Endothelial cell of umbilical vein (primary cell): ENCODE measurements at regions of chr3 and their contacts with region 1.

Region 1: GRCh38 chr3:160163229-160163878 is 61.9 kb upstream of the C3orf80 start:
- DNase-seq: peak; percentile 46
- H3K4me3 ChIP-seq: no peak overlapping the region
- H3K27ac ChIP-seq: no peak overlapping the region
- H3K4me1 ChIP-seq: no peaks in the 10 kb centered on the region
- H3K27me3 ChIP-seq: no peaks in the 10 kb centered on the region
- CTCF ChIP-seq: peak in 1 of 2 donors; percentile 8
- POLR2A ChIP-seq: no peak

Region 2: DNA sequence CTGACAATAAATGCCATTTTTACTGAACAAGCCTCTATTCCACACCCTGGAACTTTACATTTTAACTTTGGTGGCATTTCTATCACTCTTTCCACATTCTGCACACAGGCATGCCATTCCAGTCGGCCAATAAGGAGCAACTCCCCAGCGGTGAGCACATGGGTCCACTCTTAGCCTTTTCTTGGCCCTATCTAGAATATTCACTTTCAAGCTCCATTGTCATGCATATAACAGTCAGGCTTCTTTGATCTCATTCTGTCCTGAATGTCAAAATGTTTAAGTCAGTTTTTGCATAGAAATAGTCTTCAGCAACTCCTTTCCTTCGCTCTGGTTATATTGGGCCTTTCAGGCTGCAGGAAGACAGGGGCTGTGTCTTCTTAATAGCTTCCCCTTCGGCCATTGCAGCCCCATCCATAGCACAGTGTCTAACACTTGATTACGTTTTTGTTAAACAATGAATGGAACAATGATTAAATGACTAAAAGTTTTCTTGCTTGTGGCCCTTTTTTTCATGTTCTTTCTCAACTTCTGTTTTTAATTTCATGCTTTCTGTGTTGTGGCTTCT is 934.2 kb before region 1 on chr3:
- CTCF ChIA-PET with region 1: no interaction called
- POLR2A ChIA-PET with region 1: no interaction called
- dilution Hi-C with region 1: no loop called
- intact Hi-C with region 1: no loop called
- DNase-seq: no peak
- H3K4me3 ChIP-seq: no peak overlapping the region
- H3K27ac ChIP-seq: no peak overlapping the region
- H3K4me1 ChIP-seq: no peaks in the 10 kb centered on the region
- H3K27me3 ChIP-seq: no peaks in the 10 kb centered on the region
- CTCF ChIP-seq: no peak
- POLR2A ChIP-seq: no peak

Region 3: DNA sequence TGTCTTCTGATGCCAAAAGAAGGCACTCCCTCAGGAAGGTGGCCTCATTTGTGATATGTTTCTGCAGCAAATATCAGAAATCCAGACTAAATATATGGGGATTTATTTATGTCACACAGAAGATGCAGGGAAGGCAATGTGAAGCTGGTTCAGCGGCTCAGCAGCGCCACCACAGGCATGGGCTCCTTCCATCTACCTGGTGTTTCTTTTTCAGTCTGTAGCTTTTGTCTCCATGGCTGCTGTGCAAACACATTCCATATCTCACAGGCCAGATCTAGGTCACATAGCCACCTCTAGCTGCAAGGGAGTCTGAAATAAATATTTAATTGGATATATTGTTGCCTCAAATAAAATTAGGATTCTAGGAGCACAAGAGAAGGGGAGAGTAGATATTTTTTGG is 676.8 kb before region 1 on chr3:
- CTCF ChIA-PET with region 1: no interaction called
- POLR2A ChIA-PET with region 1: no interaction called
- dilution Hi-C with region 1: no loop called
- intact Hi-C with region 1: no loop called
- DNase-seq: peak; percentile 9
- H3K4me3 ChIP-seq: no peak overlapping the region
- H3K27ac ChIP-seq: no peak overlapping the region
- H3K4me1 ChIP-seq: no peaks in the 10 kb centered on the region
- H3K27me3 ChIP-seq: peaks cover 0 to 3% of the 10 kb centered on the region in 2 experiments
- CTCF ChIP-seq: peak; percentile 9 to 13
- POLR2A ChIP-seq: no peak

Region 4: DNA sequence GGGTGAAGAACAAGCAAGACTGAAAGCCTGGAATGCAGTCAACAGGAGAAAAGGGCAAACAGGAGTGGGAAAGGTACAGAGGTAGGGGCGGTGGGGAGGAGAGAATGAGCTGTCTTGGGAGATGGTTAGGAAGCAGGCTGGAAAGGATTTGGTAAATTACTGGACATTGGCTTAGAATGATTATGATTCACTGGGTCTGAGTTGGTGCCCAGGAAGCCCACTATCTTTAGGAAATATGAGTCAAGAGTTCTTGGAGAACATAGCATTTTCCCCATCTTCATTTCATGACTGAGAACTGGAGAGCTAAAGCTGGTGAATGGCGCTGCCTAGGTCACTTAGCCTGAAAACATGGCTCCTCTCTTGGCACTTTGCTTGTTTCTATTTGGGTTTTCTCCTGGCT is 12.8 kb before region 1 on chr3:
- CTCF ChIA-PET with region 1: interaction called, 13 read pairs
- POLR2A ChIA-PET with region 1: no interaction called
- dilution Hi-C with region 1: no loop called
- intact Hi-C with region 1: no loop called
- DNase-seq: peak; percentile 56
- H3K4me3 ChIP-seq: no peak overlapping the region
- H3K27ac ChIP-seq: peak overlapping the region; percentile 1
- H3K4me1 ChIP-seq: peaks cover 12% of the 10 kb centered on the region
- H3K27me3 ChIP-seq: no peaks in the 10 kb centered on the region
- CTCF ChIP-seq: no peak
- POLR2A ChIP-seq: no peak

Region 5: GRCh38 chr3:160210799-160211221 is 47.5 kb after region 1 on chr3:
- CTCF ChIA-PET with region 1: interaction called, 20 read pairs
- POLR2A ChIA-PET with region 1: no interaction called
- dilution Hi-C with region 1: no loop called
- intact Hi-C with region 1: loop called (anchors 5 kb)
- DNase-seq: peak; percentile 33
- H3K4me3 ChIP-seq: no peak overlapping the region
- H3K27ac ChIP-seq: no peak overlapping the region
- H3K4me1 ChIP-seq: no peaks in the 10 kb centered on the region
- H3K27me3 ChIP-seq: peaks cover 0 to 4% of the 10 kb centered on the region in 2 experiments
- CTCF ChIP-seq: peak in 1 of 2 donors; percentile 22
- POLR2A ChIP-seq: no peak

Region 6: DNA sequence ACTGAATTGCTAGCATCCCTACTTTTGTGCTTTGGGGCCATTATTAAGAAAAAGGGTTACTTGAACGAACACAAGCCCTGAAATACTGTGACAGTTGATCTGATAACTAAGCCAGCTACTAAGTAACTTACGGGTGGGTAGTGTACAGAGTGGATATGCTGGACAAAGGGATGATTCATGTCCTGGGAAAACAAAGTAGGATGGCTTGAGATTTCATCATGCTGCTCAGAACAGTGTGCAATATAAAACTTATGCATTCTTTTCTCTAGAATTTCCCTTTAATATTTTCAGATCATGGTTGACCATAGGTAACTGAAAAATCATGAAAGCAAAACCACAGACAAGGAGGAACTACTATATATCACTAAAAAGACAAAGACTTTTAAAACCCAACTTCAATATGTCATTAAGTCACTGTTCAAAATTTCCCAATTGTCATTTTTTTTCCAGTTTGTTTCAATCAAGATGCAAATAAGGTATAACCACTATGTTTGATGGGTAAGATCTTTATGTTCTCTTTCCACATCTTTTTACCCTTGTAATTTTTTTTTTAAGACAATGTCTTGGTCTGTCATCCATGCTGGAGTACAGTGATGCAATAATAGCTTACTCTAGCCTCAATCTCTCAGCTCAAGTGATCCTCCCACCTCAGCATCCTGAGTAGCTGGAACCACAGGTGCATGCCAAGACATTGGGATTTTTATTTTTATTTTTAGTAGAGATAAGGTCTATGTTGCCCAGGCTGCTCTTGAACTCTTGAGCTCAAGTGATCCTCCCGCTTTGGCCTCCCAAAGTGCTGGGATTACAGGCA is 168.0 kb after region 1 on chr3:
- CTCF ChIA-PET with region 1: interaction called, 10 read pairs
- POLR2A ChIA-PET with region 1: no interaction called
- dilution Hi-C with region 1: no loop called
- intact Hi-C with region 1: no loop called
- DNase-seq: peak; percentile 69
- H3K4me3 ChIP-seq: no peak overlapping the region
- H3K27ac ChIP-seq: peak overlapping the region; percentile 21
- H3K4me1 ChIP-seq: peaks cover 6% of the 10 kb centered on the region
- H3K27me3 ChIP-seq: no peaks in the 10 kb centered on the region
- CTCF ChIP-seq: no peak
- POLR2A ChIP-seq: no peak

Region 7: GRCh38 chr3:160413613-160414248 is 250.4 kb after region 1 on chr3:
- CTCF ChIA-PET with region 1: interaction called, 81 read pairs
- POLR2A ChIA-PET with region 1: no interaction called
- dilution Hi-C with region 1: no loop called
- intact Hi-C with region 1: loop called (anchors 1 kb)
- DNase-seq: peak; percentile 86
- H3K4me3 ChIP-seq: no peak overlapping the region
- H3K27ac ChIP-seq: no peak overlapping the region
- H3K4me1 ChIP-seq: peaks cover 8% of the 10 kb centered on the region
- H3K27me3 ChIP-seq: no peaks in the 10 kb centered on the region
- CTCF ChIP-seq: peak; percentile 64 to 71
- POLR2A ChIP-seq: no peak